Activated CD4-positive, alpha-beta T cell treated with anti-CD3 and anti-CD28 coated beads, Interleukin-2, amount 10 ng/mL, durations not matched to agents 24 days and 14 days (primary cell): ENCODE measurements at regions of chr11 and their contacts with region 1.

Region 1: DNA sequence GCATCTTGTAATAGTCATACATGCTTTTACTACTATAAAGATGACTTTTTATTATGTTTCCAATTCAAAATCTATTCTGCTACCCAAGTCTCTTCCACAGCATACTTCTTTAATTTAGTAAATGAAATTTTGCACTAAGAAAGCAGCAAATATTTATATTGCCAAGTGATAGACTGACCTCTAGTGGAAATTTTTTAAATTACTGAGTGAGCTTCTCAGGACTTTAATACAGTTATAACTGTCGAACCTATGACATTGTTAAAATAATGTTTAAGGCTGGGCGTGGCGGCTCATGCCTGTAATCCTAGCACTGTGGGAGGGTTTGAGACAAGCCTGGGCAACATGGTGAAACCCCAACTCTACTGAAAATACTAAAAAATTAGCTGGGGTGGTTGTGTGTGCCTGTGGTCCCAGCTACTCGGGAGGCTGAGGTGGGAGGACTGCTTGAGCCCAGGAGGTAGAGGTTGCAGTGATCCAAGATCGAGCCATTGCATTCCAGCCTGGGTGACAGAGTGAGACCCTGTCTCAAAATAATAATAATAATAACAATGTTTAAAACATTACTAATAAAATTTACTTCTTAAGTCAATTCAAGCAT is 27.3 kb downstream of the STK33 start:
- DNase-seq: no peak
- H3K4me3 Mint-ChIP-seq: no peak overlapping the region
- H3K27ac Mint-ChIP-seq: no peak overlapping the region
- H3K4me1 Mint-ChIP-seq: no peaks in the 10 kb centered on the region
- H3K27me3 Mint-ChIP-seq: peaks cover 26% of the 10 kb centered on the region

Region 2: DNA sequence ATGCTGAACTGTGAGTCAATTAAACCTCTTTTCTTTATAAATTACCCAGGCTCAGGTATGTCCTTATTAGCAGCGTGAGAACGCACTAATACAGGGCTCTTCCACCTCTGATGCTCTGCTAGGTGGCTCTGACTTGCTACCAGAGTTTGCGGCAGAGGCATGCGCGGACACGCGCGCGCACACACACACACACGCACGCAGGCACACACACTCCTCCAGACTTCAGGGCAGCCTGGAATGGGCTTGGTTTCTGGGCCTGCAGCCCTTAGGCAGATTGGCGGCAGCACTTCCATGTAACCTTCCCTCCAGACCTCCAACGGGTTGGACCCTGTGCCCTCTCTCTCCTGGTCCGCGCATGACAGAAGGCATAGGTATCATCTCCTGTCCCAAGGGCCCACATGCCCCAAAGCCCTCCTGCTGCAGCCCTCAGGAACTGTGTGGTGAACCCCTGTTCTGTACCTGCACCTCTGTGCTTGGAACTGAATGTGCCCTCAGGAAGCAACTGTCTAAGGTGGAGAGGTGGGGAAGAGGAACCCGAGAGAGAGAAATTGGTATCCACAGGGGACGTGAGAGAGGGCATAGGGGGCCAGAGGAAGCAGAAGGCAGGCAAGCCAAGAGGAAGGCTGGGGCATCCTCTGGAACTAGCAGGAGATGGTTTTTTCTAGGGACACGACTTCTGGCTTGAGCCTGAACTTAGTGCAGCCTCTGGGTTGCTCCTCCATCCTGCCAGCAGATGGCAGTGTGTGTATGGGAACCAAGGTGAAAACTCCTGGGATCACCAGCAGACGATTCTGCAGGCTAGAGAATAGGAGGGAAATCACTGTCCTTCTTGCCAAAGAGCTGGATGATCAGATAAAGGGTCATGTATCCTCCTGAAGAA is 374.5 kb before region 1 on chr11:
- intact Hi-C with region 1: loop called (anchors 1 kb)
- DNase-seq: peak; percentile 82
- H3K4me3 Mint-ChIP-seq: no peak overlapping the region
- H3K27ac Mint-ChIP-seq: no peak overlapping the region
- H3K4me1 Mint-ChIP-seq: no peaks in the 10 kb centered on the region
- H3K27me3 Mint-ChIP-seq: no peaks in the 10 kb centered on the region

Region 3: GRCh38 chr11:8225589-8226036 is 341.1 kb before region 1 on chr11:
- intact Hi-C with region 1: loop called (anchors 1 kb)
- DNase-seq: peak; percentile 88
- H3K4me3 Mint-ChIP-seq: no peak overlapping the region
- H3K27ac Mint-ChIP-seq: no peak overlapping the region
- H3K4me1 Mint-ChIP-seq: peaks cover 1% of the 10 kb centered on the region
- H3K27me3 Mint-ChIP-seq: no peaks in the 10 kb centered on the region

Region 4: DNA sequence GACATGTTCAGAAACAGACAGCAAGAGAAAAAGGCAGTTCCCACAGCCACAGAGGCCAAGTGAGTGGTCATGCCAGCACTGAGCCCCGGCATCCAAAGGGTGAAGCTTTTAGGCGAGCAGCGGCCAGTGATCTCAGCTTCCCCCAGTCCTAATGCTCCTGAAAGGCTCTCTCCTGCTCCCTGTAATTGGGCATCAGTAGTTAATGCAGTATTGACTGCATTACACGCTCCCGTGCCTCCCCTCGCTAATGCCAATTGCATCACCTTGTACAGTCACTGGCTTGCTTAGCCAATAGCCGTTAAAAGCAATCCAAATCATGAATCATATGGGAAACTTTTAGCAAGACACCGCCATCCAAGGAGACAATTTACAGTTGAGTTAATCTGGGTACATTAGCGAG is 307.9 kb before region 1 on chr11:
- intact Hi-C with region 1: no loop called
- DNase-seq: no peak
- H3K4me3 Mint-ChIP-seq: no peak overlapping the region
- H3K27ac Mint-ChIP-seq: no peak overlapping the region
- H3K4me1 Mint-ChIP-seq: peaks cover 4% of the 10 kb centered on the region
- H3K27me3 Mint-ChIP-seq: peaks cover 34% of the 10 kb centered on the region

Region 5: DNA sequence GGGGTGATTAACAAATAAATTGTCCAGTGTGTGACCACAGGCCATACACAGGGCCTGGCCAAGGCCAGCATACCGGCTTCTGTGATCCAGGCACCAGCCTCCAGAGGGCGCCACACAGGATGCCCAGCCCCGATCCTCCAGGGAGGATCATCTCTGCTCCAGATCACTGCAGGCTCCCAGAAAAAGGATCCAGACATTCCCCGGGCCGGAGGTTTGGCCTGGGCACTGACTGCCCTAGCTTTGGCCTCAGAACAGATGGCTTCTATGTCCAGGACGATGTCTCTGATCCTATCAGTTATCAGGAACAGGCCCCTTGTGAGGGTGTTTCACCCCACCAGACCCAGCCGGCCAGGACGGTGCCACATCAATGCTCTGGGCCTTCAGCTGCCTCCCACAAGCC is 228.6 kb before region 1 on chr11:
- intact Hi-C with region 1: loop called (anchors 1 kb)
- DNase-seq: peak; percentile 76
- H3K4me3 Mint-ChIP-seq: no peak overlapping the region
- H3K27ac Mint-ChIP-seq: no peak overlapping the region
- H3K4me1 Mint-ChIP-seq: no peaks in the 10 kb centered on the region
- H3K27me3 Mint-ChIP-seq: no peaks in the 10 kb centered on the region

Region 6: DNA sequence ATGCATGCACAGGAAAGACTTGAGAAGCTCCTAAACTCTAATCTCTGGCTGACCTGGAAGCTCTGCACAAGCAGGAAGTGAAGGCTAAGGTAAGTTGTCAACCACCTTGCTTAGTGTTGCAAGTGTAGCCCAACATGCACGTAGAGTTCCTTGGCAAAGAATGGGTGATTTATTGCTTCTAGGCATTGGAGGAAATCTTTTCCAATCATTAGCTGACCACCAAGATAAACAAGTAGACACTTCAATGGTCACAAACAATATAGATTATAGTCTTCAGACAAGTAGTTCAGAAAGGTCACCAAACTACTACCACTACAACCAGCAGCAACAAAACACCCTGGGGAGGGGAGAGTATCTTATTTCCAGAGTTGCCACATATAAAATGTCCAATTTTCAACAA is 78.3 kb before region 1 on chr11:
- intact Hi-C with region 1: no loop called
- DNase-seq: no peak
- H3K4me3 Mint-ChIP-seq: no peak overlapping the region
- H3K27ac Mint-ChIP-seq: no peak overlapping the region
- H3K4me1 Mint-ChIP-seq: no peaks in the 10 kb centered on the region
- H3K27me3 Mint-ChIP-seq: peaks cover 2% of the 10 kb centered on the region